K562 (cell line): ENCODE measurements at regions of chr19 and their contacts with region 1.

Region 1: GRCh38 chr19:38409631-38410133 is 6.8 kb downstream of the FAM98C start:
- DNase-seq: no peak
- ATAC-seq: no peak
- H3K4me3 ChIP-seq: no peak overlapping the region
- H3K27ac ChIP-seq: no peak overlapping the region
- H3K4me1 ChIP-seq: peaks cover 25 to 48% of the 10 kb centered on the region in 2 experiments; a peak in 4 of 5 replicates
- H3K27me3 ChIP-seq: no peaks in the 10 kb centered on the region
- CTCF ChIP-seq: no peak
- EP300 ChIP-seq: no peak
- POLR2A ChIP-seq: peak; percentile 51; the same call in 1 of the 2 replicates
- RAD21 ChIP-seq: no peak

Region 2: GRCh38 chr19:38361633-38362075 is 48.0 kb before region 1 on chr19:
- CTCF ChIA-PET with region 1: no interaction called
- POLR2A ChIA-PET with region 1: no interaction called
- in situ Hi-C with region 1: no loop called
- intact Hi-C with region 1: no loop called
- DNase-seq: peak; percentile 91 to 92 (median 91)
- ATAC-seq: peak; percentile 90
- H3K4me3 ChIP-seq: peak overlapping the region; percentile 64
- H3K27ac ChIP-seq: no peak overlapping the region
- H3K4me1 ChIP-seq: peaks cover 10 to 26% of the 10 kb centered on the region in 2 experiments; a peak in 4 of 5 replicates
- H3K27me3 ChIP-seq: peaks cover 24 to 26% of the 10 kb centered on the region in 2 experiments
- CTCF ChIP-seq: peak; percentile 3 to 54 (median 34); a peak in 2 of 6 replicates
- EP300 ChIP-seq: no peak
- POLR2A ChIP-seq: no peak
- RAD21 ChIP-seq: no peak

Region 3: GRCh38 chr19:38506723-38507550 is 97.3 kb after region 1 on chr19:
- CTCF ChIA-PET with region 1: no interaction called
- POLR2A ChIA-PET with region 1: no interaction called
- in situ Hi-C with region 1: no loop called
- intact Hi-C with region 1: loop called (anchors 5 kb)
- DNase-seq: peak; percentile 99 to 100 (median 100)
- ATAC-seq: peak; percentile 96
- H3K4me3 ChIP-seq: peak overlapping the region; percentile 3; the same call in 1 of the 2 replicates
- H3K27ac ChIP-seq: peak overlapping the region; percentile 43
- H3K4me1 ChIP-seq: peaks cover 13 to 28% of the 10 kb centered on the region in 2 experiments; a peak in 4 of 5 replicates
- H3K27me3 ChIP-seq: no peaks in the 10 kb centered on the region
- CTCF ChIP-seq: no peak
- EP300 ChIP-seq: no peak
- POLR2A ChIP-seq: peak; percentile 76
- RAD21 ChIP-seq: 0 out of 4 replicates have a peak, but pooled peaks of 1 of the 2 experiments have one; percentile 6

Region 4: DNA sequence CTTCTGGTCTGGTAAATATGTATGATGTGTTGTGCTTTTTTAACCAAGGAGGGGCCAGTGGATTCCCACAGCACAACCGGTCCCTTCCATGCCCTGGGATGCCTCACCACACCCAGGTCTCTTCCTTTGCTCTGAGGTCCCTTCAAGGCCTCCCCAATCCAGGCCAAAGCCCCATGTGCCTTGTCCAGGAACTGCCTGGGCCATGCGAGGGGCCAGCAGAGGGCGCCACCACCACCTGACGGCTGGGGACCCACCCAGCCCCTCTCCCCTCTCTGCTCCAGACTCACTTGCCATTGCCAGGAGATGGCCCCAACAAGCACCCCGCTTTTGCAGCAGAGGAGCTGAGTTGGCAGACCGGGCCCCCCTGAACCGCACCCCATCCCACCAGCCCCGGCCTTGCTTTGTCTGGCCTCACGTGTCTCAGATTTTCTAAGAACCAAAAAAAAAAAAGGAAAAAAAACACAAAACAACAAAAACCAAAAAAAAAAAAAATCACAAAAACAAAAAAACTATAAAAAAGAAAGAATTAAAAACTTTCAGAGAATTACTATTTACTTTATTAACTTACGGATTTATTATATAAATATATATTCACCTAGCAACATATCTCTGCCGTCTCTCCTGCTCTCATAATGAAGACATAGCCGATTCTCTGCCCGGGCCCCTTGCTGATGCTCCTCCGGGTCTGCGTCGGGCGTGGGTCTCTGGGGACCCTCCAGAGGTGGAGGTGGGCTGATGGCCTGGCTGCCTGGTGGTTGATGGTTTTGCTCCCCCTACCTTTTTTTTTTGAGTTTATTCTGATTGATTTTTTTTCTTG is 320.2 kb after region 1 on chr19:
- CTCF ChIA-PET with region 1: no interaction called
- POLR2A ChIA-PET with region 1: no interaction called
- in situ Hi-C with region 1: no loop called
- intact Hi-C with region 1: no loop called
- DNase-seq: peak; percentile 66 to 87 (median 72)
- ATAC-seq: peak; percentile 91
- H3K4me3 ChIP-seq: no peak overlapping the region
- H3K27ac ChIP-seq: peak overlapping the region; percentile 49; the same call in 1 of the 3 replicates
- H3K4me1 ChIP-seq: peaks cover 19 to 61% of the 10 kb centered on the region in 2 experiments
- H3K27me3 ChIP-seq: no peaks in the 10 kb centered on the region
- CTCF ChIP-seq: peak; percentile 84 to 96 (median 88)
- EP300 ChIP-seq: no peak
- POLR2A ChIP-seq: no peak
- RAD21 ChIP-seq: peak; percentile 61 to 75